Panc1 (cell line): ENCODE measurements at regions of chr2 and their contacts with region 1.

Region 1: DNA sequence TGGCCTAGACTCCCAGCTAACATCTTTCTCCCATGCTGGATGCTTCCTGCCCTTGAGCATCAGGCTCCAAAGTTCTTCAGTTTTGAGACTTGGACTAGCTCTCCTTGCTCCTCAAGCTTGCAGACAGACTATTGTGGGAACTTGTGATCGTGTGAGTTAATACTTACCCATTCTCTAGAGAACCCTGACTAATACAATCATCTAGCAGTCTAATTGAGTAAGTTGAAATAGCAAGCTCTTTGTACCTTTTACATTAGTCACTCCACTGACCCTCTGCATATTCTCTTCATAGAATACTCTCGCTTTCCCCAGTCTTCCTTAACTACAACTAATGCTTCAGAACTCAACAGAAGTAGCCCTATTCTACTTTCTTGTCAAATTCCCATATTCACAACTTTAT is 434.6 kb upstream of the NXPH2 start:
- DNase-seq: no peak
- ATAC-seq: no peak
- H3K4me3 ChIP-seq: no peak overlapping the region
- H3K27ac ChIP-seq: no peak overlapping the region
- H3K4me1 ChIP-seq: no peaks in the 10 kb centered on the region
- H3K27me3 ChIP-seq: no peaks in the 10 kb centered on the region
- CTCF ChIP-seq: no peak

Region 2: GRCh38 chr2:139177041-139177440 is 37.8 kb before region 1 on chr2:
- CTCF ChIA-PET with region 1: interaction called, 16 read pairs
- POLR2A ChIA-PET with region 1: no interaction called
- in situ Hi-C with region 1: no loop called
- intact Hi-C with region 1: no loop called
- DNase-seq: no peak
- ATAC-seq: no peak
- H3K4me3 ChIP-seq: no peak overlapping the region
- H3K27ac ChIP-seq: no peak overlapping the region
- H3K4me1 ChIP-seq: no peaks in the 10 kb centered on the region
- H3K27me3 ChIP-seq: no peaks in the 10 kb centered on the region
- CTCF ChIP-seq: no peak